A673 (cell line): ENCODE measurements at regions of chr18 and their contacts with region 1.

Region 1: GRCh38 chr18:10453806-10454673 is at the start of gene APCDD1:
- DNase-seq: peak; percentile 93
- H3K4me3 ChIP-seq: peak within 1 kb of the TSS; percentile 73
- H3K27ac ChIP-seq: peak within 1 kb of the TSS; percentile 99
- H3K4me1 ChIP-seq: peaks cover 45% of the 10 kb centered on the region
- H3K27me3 ChIP-seq: no peaks in the 10 kb centered on the region
- CTCF ChIP-seq: no peak
- total RNA-seq, gene APCDD1: 333 and 355 TPM in 2 replicates

Region 2: DNA sequence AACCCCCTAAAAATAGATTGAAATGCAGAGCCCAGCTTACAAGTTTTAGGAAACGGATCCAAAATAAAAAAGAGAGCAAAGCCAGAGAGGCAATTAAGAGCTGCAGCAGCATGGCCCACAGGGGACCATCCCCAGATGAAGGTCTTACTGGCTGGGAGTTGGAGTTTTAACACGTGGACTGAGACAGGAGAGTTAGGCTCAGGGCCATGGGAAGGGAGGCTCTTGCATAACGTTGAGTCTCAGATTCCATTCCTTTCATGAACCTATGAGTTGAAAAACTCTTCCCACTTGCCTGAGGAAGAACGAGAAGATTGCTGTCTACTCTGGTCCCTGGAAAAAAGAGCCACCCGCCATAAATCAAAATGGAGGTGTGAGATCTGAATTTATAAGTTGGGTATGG is 1453.3 kb before region 1 on chr18:
- CTCF ChIA-PET with region 1: no interaction called
- POLR2A ChIA-PET with region 1: interaction called, 13 read pairs
- intact Hi-C with region 1: no loop called
- DNase-seq: no peak
- H3K4me3 ChIP-seq: no peak overlapping the region
- H3K27ac ChIP-seq: no peak overlapping the region
- H3K4me1 ChIP-seq: no peaks in the 10 kb centered on the region
- H3K27me3 ChIP-seq: no peaks in the 10 kb centered on the region
- CTCF ChIP-seq: no peak

Region 3: GRCh38 chr18:10247021-10247741 is 206.9 kb before region 1 on chr18:
- CTCF ChIA-PET with region 1: no interaction called
- POLR2A ChIA-PET with region 1: no interaction called
- intact Hi-C with region 1: loop called (anchors 10 kb)
- DNase-seq: no peak
- H3K4me3 ChIP-seq: no peak overlapping the region
- H3K27ac ChIP-seq: no peak overlapping the region
- H3K4me1 ChIP-seq: peaks cover 23% of the 10 kb centered on the region
- H3K27me3 ChIP-seq: no peaks in the 10 kb centered on the region
- CTCF ChIP-seq: no peak

Region 4: DNA sequence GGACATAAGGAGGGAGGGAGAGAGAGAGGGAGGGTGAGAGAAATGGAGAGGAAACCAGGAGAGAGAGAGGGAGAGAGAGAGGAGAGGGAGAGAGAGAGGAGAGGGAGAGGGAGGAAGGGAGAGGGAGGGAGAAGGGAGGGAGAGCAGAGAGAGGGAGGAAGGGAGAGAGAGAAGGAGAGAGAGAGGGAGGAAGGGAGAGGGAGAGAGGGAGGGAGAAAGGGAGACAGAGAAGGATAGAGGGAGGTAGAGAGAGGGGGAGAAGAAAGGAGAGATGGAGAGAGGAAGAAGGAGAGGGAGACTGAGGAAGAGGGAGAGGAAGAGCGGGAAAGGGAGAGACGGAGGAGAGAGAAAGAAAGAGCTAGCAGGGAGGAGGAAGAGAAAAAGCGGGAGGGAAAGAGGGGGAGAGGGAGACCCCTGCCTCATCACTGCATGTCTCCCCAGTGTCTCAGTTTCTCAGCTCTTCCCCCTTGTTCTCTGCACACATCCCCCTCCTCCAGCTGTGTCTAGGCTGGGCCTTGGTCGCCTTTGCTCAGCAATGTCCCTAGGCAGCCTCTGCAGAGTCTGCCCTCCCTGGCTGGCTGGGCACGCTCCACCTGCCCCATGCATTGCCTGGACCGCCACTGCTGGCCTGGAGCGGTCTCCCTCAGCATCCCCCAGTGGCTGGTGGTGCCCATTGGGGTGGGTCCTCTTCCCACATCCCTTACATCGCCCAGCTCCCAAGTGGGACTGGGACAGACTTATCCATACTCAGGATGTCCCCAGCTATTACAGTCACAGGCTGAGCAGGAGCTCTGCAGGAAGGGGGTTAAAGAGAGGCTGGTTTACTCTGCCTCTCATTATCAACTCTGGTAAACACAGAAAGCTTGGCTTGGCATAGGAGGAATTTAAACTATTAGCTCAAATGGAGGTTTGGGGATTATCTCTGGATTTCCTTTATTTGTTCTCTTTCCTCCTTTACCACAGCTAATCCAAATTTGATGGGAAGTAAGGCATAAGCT is 85.3 kb before region 1 on chr18:
- CTCF ChIA-PET with region 1: no interaction called
- POLR2A ChIA-PET with region 1: no interaction called
- intact Hi-C with region 1: no loop called
- DNase-seq: no peak
- H3K4me3 ChIP-seq: no peak overlapping the region
- H3K27ac ChIP-seq: no peak overlapping the region
- H3K4me1 ChIP-seq: no peaks in the 10 kb centered on the region
- H3K27me3 ChIP-seq: no peaks in the 10 kb centered on the region
- CTCF ChIP-seq: no peak

Region 5: DNA sequence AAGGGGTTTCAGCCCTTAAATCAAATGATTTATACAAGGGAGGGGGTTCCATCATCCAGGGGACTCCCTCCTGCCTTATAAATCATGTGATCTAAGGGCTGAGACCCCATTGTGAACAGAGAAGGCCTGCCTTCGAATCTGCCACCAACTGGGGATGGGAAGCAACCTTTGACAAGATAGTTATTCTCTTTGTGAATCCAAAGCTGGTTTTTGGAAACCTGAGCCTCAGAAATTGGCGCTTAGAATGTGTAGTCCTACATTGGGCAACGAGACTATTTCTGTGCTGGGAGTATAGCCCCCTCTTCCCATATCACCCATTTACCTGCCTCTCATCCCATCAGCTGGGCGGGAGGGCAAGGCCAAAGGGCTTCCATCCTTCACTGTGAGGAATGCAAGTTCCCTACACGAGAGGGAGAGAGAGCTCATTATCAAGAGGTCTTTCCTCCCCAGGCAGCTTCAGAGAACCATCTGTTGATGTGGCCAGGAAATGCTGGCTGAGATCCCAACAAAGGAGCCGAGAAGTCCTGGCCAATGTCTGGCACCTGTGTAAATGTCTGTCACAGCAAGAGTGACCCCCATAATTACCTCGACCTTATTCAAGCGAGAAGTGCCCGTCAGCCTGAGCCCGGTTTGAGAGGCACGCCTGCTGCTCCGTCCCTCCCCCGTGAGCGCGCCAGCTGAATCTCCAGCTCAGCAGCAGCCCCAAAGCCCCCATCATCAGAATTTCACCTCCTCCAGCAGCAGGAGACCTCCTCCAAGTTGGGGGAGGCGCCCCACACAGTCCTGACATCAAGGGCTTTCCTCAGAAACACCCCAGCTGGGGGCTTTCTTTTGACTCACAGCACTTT is 48.0 kb before region 1 on chr18:
- CTCF ChIA-PET with region 1: no interaction called
- POLR2A ChIA-PET with region 1: interaction called, 3 read pairs
- intact Hi-C with region 1: loop called (anchors 2 kb)
- DNase-seq: peak; percentile 52
- H3K4me3 ChIP-seq: no peak overlapping the region
- H3K27ac ChIP-seq: peak overlapping the region; percentile 9
- H3K4me1 ChIP-seq: peaks cover 54% of the 10 kb centered on the region
- H3K27me3 ChIP-seq: peaks cover 4% of the 10 kb centered on the region
- CTCF ChIP-seq: no peak